GM12878 (cell line): ENCODE measurements at regions of chr6 and their contacts with region 1.

Region 1: GRCh38 chr6:104859225-104860146 is at the start of gene HACE1:
- DNase-seq: peak; percentile 45
- ATAC-seq: peak; percentile 99
- H3K4me3 ChIP-seq: peak within 1 kb of the TSS; percentile 100
- H3K27ac ChIP-seq: peak within 1 kb of the TSS; percentile 42
- H3K4me1 ChIP-seq: no peaks in the 10 kb centered on the region
- H3K27me3 ChIP-seq: no peaks in the 10 kb centered on the region
- CTCF ChIP-seq: peak in 1 of 3 experiments; percentile 9; a peak in 1 of 6 replicates
- EP300 ChIP-seq: no peak
- POLR2A ChIP-seq: peak; percentile 78
- RAD21 ChIP-seq: no peak
- polyA plus RNA-seq, gene HACE1: 1.6 to 2.6 TPM

Region 2: GRCh38 chr6:104789770-104790190 is 69.7 kb before region 1 on chr6:
- CTCF ChIA-PET with region 1: interaction called, 18 read pairs
- POLR2A ChIA-PET with region 1: interaction called, 3 read pairs
- RAD21 ChIA-PET with region 1: no interaction called
- SMC1A ChIA-PET with region 1: interaction called, 12 read pairs
- in situ Hi-C with region 1: no loop called
- intact Hi-C with region 1: no loop called
- DNase-seq: no peak
- ATAC-seq: peak; percentile 90
- H3K4me3 ChIP-seq: no peak overlapping the region
- H3K27ac ChIP-seq: no peak overlapping the region
- H3K4me1 ChIP-seq: peaks cover 3% of the 10 kb centered on the region; the same call in 1 of the 2 replicates
- H3K27me3 ChIP-seq: no peaks in the 10 kb centered on the region
- CTCF ChIP-seq: peak; percentile 30 to 46 (median 41); a peak in 4 of 6 replicates
- EP300 ChIP-seq: no peak
- POLR2A ChIP-seq: no peak
- RAD21 ChIP-seq: peak; percentile 34; the same call in 1 of the 2 replicates

Region 3: DNA sequence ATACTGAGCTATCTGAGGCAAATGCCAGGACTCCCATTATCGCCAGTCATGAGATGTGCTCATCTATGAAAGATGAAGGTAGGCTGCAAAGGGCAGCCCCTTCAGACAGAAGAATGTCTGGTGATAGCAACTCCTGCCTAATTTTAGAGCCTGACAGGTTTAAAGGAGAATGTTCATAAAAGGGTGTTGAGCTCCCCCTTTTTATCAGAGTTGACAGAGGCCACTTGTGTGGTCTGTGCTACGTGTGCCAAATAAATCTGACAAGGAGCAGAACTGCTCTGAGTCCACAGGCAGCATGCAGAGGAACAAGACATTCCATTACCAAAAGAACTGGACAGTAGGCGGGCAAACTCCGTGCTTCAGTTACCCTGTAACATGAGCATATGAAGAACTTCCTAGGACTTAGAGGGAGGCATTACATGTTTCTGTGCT is 441.6 kb after region 1 on chr6:
- CTCF ChIA-PET with region 1: no interaction called
- POLR2A ChIA-PET with region 1: no interaction called
- RAD21 ChIA-PET with region 1: no interaction called
- SMC1A ChIA-PET with region 1: no interaction called
- in situ Hi-C with region 1: no loop called
- intact Hi-C with region 1: no loop called
- DNase-seq: no peak
- ATAC-seq: no peak
- H3K4me3 ChIP-seq: no peak overlapping the region
- H3K27ac ChIP-seq: no peak overlapping the region
- H3K4me1 ChIP-seq: no peaks in the 10 kb centered on the region
- H3K27me3 ChIP-seq: no peaks in the 10 kb centered on the region
- CTCF ChIP-seq: no peak
- EP300 ChIP-seq: no peak
- POLR2A ChIP-seq: no peak
- RAD21 ChIP-seq: no peak